Left ventricle myocardium inferior (tissue), 1 donor: ENCODE measurements at regions of chr5 and their contacts with region 1.

Region 1: DNA sequence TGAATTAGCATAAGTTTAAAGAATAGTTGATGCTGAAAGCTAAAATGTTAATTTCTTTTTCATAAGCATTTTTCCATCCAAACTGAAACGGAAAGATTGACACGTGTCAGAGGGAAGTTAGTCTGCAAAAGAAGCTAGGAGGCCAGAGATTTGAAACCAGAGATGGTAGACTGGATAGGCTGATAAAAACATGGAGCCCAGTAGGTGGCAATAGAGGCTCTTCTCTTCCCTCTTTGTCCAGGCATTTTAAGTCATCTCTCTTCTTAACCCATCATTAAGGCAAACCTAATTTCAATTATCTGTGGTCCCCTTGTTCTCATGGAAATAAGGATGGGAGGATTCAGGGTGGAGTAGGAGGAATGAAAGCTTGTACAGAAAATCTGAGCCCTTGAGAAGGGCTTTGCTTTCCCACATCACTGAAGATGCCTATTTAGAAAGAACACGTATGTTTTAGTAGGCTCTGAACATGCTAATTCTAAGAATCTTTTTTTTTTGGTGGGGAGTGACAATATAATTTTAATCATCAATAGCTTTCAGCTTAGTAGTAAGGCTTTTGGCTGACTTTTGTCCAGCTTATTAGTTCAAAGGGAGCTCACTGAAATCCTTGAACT is 66.5 kb downstream of the ZNF474 start:
- DNase-seq: no peak
- H3K4me3 ChIP-seq: no peak overlapping the region
- H3K27ac ChIP-seq: no peak overlapping the region
- H3K4me1 ChIP-seq: no peaks in the 10 kb centered on the region
- H3K27me3 ChIP-seq: no peaks in the 10 kb centered on the region
- CTCF ChIP-seq: peak; percentile 68

Region 2: GRCh38 chr5:122415030-122415800 is 219.3 kb after region 1 on chr5:
- intact Hi-C with region 1: loop called (anchors 5 kb)
- DNase-seq: peak; percentile 27
- H3K4me3 ChIP-seq: no peak overlapping the region
- H3K27ac ChIP-seq: no peak overlapping the region
- H3K4me1 ChIP-seq: no peaks in the 10 kb centered on the region
- H3K27me3 ChIP-seq: peaks cover 12% of the 10 kb centered on the region
- CTCF ChIP-seq: peak; percentile 82